Natural killer cell (primary cell): ENCODE measurements at regions of chr11 and their contacts with region 1.

Region 1: DNA sequence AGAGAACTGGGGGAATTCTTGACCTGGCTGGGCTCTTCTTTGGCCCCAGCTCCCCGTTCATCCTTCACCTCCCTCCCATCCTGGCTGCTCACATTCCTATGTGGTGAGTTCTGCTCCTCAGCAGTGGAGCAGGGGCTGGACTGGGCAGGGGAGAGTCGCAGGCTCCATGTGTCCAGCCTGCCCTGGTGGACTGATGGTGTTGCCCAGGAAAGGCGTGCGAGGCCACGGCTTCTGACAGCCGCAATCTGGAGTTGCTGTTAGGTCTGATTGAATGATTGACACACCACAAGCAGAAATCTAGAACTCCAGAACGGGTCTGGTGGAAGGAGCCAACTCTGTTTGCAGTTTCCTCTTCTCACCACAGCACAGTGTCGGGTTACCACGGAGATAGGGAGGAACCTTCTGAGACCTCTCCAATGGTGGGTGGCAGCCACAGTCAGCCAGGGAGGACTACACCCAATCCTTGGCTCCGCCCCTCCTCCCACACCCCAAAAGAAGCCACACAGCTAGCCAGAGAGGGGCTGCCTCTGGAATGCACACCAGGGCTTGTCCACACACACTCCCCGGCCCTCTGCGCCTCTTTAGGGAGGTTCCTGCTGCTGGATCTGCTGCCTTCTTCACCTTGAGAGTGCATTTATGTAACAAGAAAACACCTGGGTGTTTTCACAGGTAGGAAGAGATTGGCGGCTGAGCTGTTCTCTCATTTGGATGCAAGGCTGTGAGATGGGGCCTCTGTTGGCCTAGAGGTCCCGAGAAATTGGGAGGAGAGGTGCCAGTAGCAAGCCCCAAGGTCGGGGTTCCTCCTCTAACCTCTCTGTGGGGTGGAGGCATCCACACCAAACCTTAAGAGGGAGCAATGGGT is 56.4 kb upstream of the CD44 start:
- DNase-seq: peak; percentile 69 to 95
- ATAC-seq: peak; percentile 62 to 88 (median 78)
- H3K4me3 ChIP-seq: peak overlapping the region; percentile 2
- H3K4me3 Mint-ChIP-seq: peak overlapping the region; percentile 76
- H3K27ac ChIP-seq: peak overlapping the region; percentile 96
- H3K27ac Mint-ChIP-seq: peak overlapping the region; percentile 87 to 94
- H3K4me1 ChIP-seq: peaks cover 65% of the 10 kb centered on the region
- H3K4me1 Mint-ChIP-seq: peaks cover 66 to 75% of the 10 kb centered on the region in 2 donors
- H3K27me3 ChIP-seq: no peaks in the 10 kb centered on the region
- H3K27me3 Mint-ChIP-seq: peaks cover 0 to 6% of the 10 kb centered on the region in 2 donors
- CTCF ChIP-seq: no peak

Region 2: DNA sequence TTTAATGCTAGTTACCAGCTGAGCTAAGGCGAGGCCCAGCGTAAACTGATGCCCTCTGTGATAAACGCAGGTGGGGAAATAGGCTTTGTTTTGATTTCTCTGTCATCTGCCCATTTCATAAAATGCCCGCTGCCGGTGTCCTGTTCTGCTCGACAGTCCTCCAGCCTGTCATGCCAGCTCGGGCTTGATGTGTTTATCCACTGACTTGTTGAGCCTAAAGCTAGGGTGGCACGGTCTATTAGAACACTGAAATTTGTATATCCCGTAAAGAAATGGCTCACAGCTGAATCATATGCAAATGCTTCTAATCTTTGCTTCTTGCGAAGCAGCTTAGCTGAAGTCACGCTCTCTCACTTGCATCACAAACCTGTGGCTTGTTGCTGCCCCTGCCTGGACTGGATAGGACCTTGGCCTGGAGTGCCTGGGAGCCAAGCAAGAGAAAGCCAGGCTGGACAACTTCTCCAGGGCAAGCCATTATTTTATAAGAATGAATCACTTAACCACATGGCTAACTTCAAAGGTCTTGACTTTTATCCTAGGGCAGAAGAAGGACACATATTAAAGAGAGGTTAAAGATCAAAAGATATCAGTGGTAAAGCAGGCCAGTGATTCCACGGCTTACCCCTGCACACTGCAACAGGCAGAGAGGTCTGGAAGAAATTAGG is 428.6 kb before region 1 on chr11:
- intact Hi-C with region 1: loop called (anchors 10 kb)
- DNase-seq: no peak
- ATAC-seq: no peak
- H3K4me3 ChIP-seq: no peak overlapping the region
- H3K4me3 Mint-ChIP-seq: no peak overlapping the region
- H3K27ac ChIP-seq: no peak overlapping the region
- H3K27ac Mint-ChIP-seq: no peak overlapping the region
- H3K4me1 ChIP-seq: peaks cover 35% of the 10 kb centered on the region
- H3K4me1 Mint-ChIP-seq: peaks cover 29 to 39% of the 10 kb centered on the region in 2 donors
- H3K27me3 ChIP-seq: peaks cover 26% of the 10 kb centered on the region
- H3K27me3 Mint-ChIP-seq: peaks cover 48 to 64% of the 10 kb centered on the region in 2 donors
- CTCF ChIP-seq: no peak

Region 3: DNA sequence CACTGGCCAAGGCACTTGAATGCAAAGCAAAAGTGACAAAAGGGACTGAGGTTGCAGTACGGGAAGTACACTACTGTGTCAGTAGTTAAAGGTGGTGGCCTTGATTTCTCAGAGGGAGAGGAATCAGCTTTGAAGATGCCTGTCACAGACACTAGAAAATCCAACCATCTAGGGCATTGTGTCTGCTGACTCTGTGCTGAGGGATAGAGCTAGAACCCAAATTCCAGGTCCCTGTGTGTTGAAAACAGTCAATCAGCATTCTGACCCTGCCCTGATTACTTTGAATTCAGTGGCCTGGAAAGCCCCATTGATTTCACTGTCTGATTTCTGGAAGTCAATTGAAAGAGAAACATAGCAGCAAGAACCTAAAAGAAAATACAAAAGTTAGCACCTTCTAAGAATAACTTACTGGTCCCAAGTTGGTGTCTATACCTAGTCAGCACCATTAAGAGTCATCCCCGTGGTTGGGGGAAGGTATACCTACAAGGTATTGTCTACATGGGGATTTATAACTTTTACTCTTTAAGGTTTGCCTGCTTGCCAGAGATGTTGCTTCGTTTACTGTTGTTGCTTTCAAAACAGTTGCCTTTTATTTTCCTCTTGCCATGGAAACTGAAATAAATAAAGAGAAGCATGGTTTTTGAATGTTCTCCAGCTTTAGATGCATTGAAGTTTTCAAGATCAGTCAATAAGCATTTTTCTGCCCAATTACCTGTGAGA is 68.9 kb before region 1 on chr11:
- intact Hi-C with region 1: no loop called
- DNase-seq: peak in 1 of 2 donors; percentile 78
- ATAC-seq: peak; percentile 73 to 79 (median 74)
- H3K4me3 ChIP-seq: no peak overlapping the region
- H3K4me3 Mint-ChIP-seq: no peak overlapping the region
- H3K27ac ChIP-seq: peak overlapping the region; percentile 73
- H3K27ac Mint-ChIP-seq: peak overlapping the region; percentile 52 to 68
- H3K4me1 ChIP-seq: peaks cover 21% of the 10 kb centered on the region
- H3K4me1 Mint-ChIP-seq: peaks cover 17 to 18% of the 10 kb centered on the region in 2 donors
- H3K27me3 ChIP-seq: no peaks in the 10 kb centered on the region
- H3K27me3 Mint-ChIP-seq: no peaks in the 10 kb centered on the region
- CTCF ChIP-seq: no peak

Region 4: DNA sequence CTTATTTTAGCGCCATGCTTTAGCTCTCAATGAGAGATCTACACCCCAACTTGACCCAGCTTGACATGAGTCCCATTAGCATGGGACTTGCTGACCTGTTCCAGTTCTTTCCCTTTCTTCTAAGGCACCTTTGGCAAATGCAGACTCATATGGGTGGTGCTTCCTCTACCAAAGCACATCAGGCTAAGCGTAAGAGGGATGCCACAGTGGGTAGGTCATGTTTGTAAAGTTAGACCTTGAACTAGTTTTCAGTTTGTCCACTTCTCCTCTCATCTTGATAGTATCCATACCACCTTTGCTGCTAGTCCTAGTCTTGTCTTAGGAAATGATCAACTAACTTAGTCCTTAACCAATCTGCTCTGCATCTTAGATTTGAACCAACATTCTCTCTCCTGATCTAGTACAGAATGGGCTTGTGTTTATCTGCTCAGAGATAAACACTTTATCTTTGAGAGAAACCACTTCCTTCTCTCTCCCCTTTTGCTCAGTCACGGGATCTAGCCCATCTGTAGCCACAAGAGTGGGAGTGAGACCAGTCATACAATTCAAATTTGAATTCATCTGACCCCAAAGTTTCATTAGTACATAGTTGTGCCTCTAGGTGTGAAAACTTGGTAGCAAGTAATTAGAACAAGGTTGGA is 15.6 kb before region 1 on chr11:
- intact Hi-C with region 1: no loop called
- DNase-seq: peak in 1 of 2 donors; percentile 70
- ATAC-seq: peak; percentile 73 to 90 (median 84)
- H3K4me3 ChIP-seq: no peak overlapping the region
- H3K4me3 Mint-ChIP-seq: peak overlapping the region; percentile 73
- H3K27ac ChIP-seq: peak overlapping the region; percentile 38
- H3K27ac Mint-ChIP-seq: peak overlapping the region; percentile 81 to 84
- H3K4me1 ChIP-seq: peaks cover 25% of the 10 kb centered on the region
- H3K4me1 Mint-ChIP-seq: peaks cover 36 to 37% of the 10 kb centered on the region in 2 donors
- H3K27me3 ChIP-seq: no peaks in the 10 kb centered on the region
- H3K27me3 Mint-ChIP-seq: peaks cover 4 to 15% of the 10 kb centered on the region in 2 donors
- CTCF ChIP-seq: no peak

Region 5: DNA sequence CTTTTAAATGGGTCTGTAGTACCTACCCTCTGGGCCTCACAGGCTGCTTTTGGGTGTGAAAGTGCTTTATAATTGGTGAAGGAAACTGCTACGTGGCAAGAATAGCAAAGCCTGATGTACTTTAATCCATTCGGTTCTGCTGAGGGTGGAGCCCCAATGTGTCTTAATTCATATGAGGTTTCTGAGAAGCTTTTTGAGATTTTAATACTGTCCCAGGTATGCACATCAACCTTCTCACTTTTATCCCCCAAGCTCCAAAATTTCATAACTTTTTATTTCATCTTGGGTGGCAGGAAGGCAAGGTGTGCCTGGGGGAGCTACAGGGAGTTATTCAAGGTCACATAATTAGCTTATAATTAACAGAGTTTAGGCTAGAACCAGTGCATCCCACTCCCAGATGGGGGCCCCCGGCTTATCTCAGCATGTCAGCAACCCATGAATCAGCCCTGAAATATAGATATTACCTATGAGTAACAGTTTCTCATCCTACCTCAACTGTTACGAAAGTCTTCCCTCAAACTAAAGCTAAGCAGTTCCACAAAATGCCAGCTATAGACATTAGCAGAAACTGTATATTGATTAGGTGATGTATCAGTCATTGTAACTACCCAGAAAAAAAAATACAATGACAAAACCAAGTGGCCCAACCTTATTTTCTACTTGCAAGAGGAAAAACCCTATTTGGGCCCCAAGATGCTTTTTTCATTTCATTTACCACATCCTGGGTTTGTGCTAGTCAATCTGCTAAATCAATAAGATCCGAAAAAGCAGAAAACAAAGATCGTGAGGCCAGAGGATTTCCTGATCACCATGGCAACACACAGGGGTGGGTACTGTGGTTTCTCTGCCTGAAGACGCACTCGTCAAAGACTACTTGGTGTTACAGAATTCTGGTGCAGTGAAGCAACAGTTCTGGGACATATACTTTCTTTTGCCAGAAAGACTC is 83.1 kb after region 1 on chr11:
- intact Hi-C with region 1: loop called (anchors 1 kb)
- DNase-seq: peak; percentile 85 to 98
- ATAC-seq: peak; percentile 69 to 89 (median 88)
- H3K4me3 ChIP-seq: peak overlapping the region; percentile 21
- H3K4me3 Mint-ChIP-seq: peak overlapping the region; percentile 90
- H3K27ac ChIP-seq: peak overlapping the region; percentile 99
- H3K27ac Mint-ChIP-seq: peak overlapping the region; percentile 90 to 99
- H3K4me1 ChIP-seq: peaks cover 68% of the 10 kb centered on the region
- H3K4me1 Mint-ChIP-seq: peaks cover 97% of the 10 kb centered on the region in 2 donors
- H3K27me3 ChIP-seq: no peaks in the 10 kb centered on the region
- H3K27me3 Mint-ChIP-seq: no peaks in the 10 kb centered on the region
- CTCF ChIP-seq: no peak

Region 6: DNA sequence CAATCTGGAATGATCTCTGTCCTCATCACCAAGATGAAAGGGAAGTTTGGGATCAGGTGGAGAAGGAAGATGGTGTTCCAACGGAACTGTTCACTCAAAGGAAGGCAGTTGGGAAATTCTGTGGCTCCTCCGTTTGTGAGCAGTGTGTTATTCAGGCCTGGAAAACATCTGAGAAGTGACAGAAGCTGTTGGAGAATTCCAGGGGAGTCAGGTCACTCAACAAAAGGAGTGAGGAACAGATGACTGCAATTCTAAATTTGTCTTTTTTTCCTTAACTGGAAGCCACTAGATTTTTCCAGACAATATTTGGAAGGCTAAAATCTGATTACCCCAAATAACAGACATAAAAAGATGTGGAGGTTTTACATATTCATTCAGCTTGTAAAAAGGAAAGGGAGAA is 164.2 kb after region 1 on chr11:
- intact Hi-C with region 1: loop called (anchors 10 kb)
- DNase-seq: no peak
- ATAC-seq: no peak
- H3K4me3 ChIP-seq: no peak overlapping the region
- H3K4me3 Mint-ChIP-seq: peak overlapping the region; percentile 62
- H3K27ac ChIP-seq: peak overlapping the region; percentile 80
- H3K27ac Mint-ChIP-seq: peak overlapping the region; percentile 81 to 93
- H3K4me1 ChIP-seq: peaks cover 40% of the 10 kb centered on the region
- H3K4me1 Mint-ChIP-seq: peaks cover 37% of the 10 kb centered on the region in 2 donors
- H3K27me3 ChIP-seq: no peaks in the 10 kb centered on the region
- H3K27me3 Mint-ChIP-seq: no peaks in the 10 kb centered on the region
- CTCF ChIP-seq: no peak